A673 (cell line): ENCODE measurements at regions of chr19 and their contacts with region 1.

Region 1: DNA sequence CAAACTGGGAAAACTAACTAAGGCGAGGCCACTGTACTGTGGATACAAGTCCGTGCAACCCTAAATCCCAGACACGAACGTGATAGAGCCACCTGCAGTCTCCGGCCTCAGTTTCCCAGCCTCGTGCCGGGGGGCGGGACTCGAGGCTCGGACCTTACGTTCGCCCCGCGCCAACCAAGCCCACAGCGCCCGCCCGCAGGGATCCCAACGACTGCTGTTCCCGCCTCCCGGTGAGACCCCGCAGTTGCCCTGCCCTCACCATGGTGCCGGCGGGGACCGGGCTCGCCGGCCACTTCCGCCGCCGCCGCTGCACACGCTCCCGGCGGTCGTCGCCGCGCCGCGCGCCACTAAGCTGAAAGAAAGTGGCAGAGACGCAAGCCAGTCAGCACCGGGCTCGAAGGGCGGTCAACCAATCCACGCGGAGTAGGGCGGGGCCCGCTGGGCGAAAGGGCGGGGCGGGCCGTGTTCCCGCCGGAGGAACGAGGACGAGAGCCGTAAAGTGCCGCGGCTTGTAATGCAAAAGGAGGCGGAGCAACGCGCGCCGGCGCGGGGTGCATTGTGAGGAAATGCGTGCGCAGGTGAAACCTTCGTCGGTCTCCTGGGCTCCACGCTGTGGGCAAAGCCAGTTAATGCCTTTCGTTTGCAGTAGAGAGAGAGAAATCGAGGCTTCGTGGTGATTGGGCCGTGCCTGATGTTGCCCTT is at the start of gene LSM4:
- DNase-seq: peak; percentile 99
- H3K4me3 ChIP-seq: peak within 1 kb of the TSS; percentile 70
- H3K27ac ChIP-seq: peak within 1 kb of the TSS; percentile 92
- H3K4me1 ChIP-seq: peaks cover 11% of the 10 kb centered on the region
- H3K27me3 ChIP-seq: no peaks in the 10 kb centered on the region
- CTCF ChIP-seq: no peak
- total RNA-seq, gene LSM4: 252 and 262 TPM in 2 replicates

Region 2: DNA sequence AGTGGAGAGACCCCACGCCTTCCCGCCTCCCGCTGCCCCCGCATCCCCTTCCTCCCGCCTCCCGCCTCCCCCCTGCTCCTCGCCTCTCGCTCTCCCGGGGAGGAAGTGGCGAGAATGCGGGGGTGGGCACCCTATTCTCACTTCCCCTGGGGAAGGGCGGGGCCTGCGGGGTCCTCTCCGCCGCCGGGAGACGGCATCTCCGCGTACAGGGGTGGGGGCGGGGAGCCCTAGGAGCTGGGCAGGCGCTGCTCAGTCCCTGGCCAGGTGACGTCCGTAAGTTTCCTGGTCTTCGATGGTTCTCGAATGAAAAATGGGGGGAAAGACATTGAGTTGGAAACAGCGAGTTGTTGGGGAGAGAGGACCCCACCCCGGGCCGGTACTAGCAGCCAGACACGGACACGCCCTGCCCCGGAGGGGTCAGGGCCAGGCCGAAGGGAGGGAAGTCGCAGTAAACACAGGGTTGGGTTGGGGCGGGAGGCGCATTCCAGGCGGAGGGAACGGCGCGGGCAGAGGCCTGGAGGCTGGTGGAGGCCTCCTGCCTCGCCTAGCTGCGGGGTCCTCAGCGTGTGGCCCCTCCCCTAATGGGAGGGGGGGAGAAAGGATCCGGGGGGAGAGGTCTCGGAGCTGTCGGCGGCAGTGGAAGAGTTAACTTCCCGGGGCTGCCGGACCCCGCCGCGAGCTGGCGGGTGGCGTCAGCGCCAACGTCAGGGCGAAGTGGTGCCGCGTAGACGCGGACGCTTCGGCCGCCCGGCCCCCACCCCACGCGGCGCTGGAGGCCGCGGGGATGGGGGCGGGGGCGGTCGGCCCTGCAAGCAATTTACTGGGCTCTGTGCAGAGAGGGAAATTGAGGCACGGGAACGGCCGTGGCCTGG is 31.1 kb before region 1 on chr19:
- CTCF ChIA-PET with region 1: no interaction called
- POLR2A ChIA-PET with region 1: no interaction called
- intact Hi-C with region 1: loop called (anchors 1 kb)
- DNase-seq: peak; percentile 88
- H3K4me3 ChIP-seq: peak overlapping the region; percentile 64
- H3K27ac ChIP-seq: peak overlapping the region; percentile 98
- H3K4me1 ChIP-seq: peaks cover 40% of the 10 kb centered on the region
- H3K27me3 ChIP-seq: no peaks in the 10 kb centered on the region
- CTCF ChIP-seq: no peak